ENCODE measurements at regions of chr2 and their contacts with region 1.

Region 1: GRCh38 chr2:219278655-219279516 is at the start of gene DNAJB2:
- DNase-seq: peak; percentile 99
- ATAC-seq: peak; percentile 92
- H3K4me3 Mint-ChIP-seq: peak within 1 kb of the TSS; percentile 93
- H3K27ac Mint-ChIP-seq: peak within 1 kb of the TSS; percentile 98
- H3K4me1 Mint-ChIP-seq: peaks cover 42% of the 10 kb centered on the region
- H3K27me3 Mint-ChIP-seq: no peaks in the 10 kb centered on the region
- total RNA-seq, gene DNAJB2: 43.5 to 51.1 TPM

Region 2: DNA sequence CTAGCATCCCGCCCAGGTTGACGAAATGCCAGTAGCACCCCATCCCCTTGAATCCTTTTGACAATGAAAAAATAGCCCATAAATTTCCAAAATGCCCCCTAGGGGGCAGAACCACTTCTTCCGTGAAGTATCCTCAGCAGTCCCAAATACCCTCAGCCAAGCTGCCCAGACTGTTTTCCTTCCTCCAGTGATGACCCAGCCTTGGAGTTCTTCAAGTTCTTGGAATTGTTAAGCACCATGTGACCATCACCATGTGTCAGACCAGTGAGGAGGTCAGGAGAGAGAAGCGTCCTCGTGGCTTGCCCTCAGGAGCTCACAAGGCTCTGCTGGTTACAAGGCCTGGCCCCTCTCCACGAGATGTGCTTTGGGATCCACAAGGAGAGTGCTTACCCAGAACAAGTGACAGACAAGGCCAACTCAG is 107.6 kb before region 1 on chr2:
- CTCF ChIA-PET with region 1: interaction called, 12 read pairs
- POLR2A ChIA-PET with region 1: interaction called, 10 read pairs
- DNase-seq: peak; percentile 54
- ATAC-seq: peak; percentile 50
- H3K4me3 Mint-ChIP-seq: no peak overlapping the region
- H3K27ac Mint-ChIP-seq: no peak overlapping the region
- H3K4me1 Mint-ChIP-seq: peaks cover 30% of the 10 kb centered on the region
- H3K27me3 Mint-ChIP-seq: no peaks in the 10 kb centered on the region

Region 3: DNA sequence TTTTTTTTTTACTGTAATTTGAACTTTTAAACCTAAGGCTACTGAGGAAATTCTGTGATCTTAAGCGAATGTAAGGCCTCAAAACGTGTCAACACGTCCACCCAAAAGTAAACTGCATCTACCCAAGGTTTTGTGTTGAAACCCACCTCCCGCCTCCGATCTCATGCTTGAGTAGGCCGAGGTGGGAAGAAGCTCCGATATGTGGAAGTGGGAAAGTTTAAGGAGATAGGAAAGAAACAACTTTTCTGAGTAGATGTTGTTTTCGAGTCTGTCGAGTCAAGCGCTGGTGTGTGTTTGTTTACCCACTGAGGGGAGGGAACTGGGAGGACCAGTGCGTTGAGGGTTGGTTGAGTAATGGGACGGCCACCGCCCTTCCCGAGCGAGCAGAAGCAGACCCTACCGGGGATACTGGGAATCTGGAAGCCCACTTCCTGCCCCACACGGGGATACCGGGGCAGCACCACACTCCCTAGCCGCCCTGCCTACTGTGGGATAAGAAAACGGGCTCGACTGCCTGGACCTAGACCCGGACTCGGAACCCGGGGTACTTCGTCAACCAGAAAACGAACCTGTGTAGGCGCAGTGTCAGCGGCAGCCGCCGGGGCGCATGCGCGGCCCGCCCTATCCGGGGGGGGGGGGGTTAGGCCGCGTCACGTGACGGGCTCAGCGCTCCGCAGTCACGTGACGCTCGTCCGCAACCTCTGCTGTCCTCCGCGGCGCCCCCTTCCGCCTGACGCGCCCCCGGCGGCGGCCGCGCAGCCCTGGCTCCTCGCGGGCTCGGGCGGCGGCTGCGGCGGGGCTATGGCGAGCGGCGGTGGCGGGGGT is 101.1 kb before region 1 on chr2 and contains the start of gene RETREG2:
- CTCF ChIA-PET with region 1: interaction called, 3 read pairs
- POLR2A ChIA-PET with region 1: interaction called, 10 read pairs
- DNase-seq: peak; percentile 82
- ATAC-seq: peak; percentile 55
- H3K4me3 Mint-ChIP-seq: peak within 1 kb of the TSS; percentile 92
- H3K27ac Mint-ChIP-seq: peak within 1 kb of the TSS; percentile 95
- H3K4me1 Mint-ChIP-seq: peaks cover 61% of the 10 kb centered on the region
- H3K27me3 Mint-ChIP-seq: no peaks in the 10 kb centered on the region
- total RNA-seq, gene RETREG2: 104 to 111 TPM

Region 4: GRCh38 chr2:219213486-219214071 is 65.3 kb before region 1 on chr2:
- CTCF ChIA-PET with region 1: no interaction called
- POLR2A ChIA-PET with region 1: no interaction called
- DNase-seq: no peak
- ATAC-seq: no peak
- H3K4me3 Mint-ChIP-seq: no peak overlapping the region
- H3K27ac Mint-ChIP-seq: no peak overlapping the region
- H3K4me1 Mint-ChIP-seq: peaks cover 53% of the 10 kb centered on the region
- H3K27me3 Mint-ChIP-seq: no peaks in the 10 kb centered on the region

Region 5: GRCh38 chr2:219229305-219230058 is 49.4 kb before region 1 on chr2 and contains the starts of genes ANKZF1 and ATG9A:
- CTCF ChIA-PET with region 1: interaction called, 4 read pairs
- POLR2A ChIA-PET with region 1: interaction called, 12 read pairs
- DNase-seq: peak; percentile 100
- ATAC-seq: peak; percentile 98
- H3K4me3 Mint-ChIP-seq: peak within 1 kb of the TSS; percentile 100
- H3K27ac Mint-ChIP-seq: peak within 1 kb of the TSS; percentile 100
- H3K4me1 Mint-ChIP-seq: peaks cover 61% of the 10 kb centered on the region
- H3K27me3 Mint-ChIP-seq: no peaks in the 10 kb centered on the region
- total RNA-seq, gene ANKZF1: 106 to 114 TPM
- total RNA-seq, gene ATG9A: 51.7 to 53.8 TPM

Region 6: DNA sequence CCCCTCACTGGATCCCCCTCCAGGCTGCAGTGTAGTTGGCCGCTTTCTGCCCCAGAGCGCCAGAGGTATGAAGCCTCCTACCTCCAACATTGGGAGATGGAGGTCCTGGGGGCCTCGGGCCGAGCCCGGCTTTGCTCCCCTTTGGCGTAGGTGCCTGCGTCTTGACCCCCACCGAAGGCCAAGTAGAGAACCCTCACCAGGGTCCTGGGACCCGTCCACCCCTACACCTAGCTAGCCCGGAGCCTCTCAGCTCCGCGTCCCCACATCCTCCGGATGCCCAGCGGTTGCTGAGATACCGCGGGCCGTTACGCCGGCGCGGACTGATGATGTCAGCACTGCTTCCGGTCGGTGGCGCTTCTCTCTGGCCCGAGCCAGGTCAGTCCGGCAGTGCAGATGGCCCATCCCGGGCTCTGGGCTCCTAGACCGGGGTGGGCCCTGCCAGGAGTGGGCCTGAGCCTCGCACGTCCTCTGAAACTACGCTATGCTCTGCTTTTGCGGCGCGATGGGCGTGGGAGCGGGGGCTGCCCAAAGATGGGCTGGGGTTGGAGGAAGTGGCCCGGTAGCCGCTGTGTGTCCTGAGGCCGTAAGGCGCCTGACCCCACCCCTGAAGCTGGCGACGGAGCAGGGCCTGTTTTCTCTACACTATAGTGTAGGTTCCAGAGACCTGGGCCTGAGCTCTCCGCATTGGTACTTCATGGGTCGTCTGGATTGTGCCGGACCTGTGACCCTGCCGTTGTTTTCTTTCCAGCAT is 33.6 kb before region 1 on chr2 and contains the starts of genes GLB1L and STK16:
- CTCF ChIA-PET with region 1: interaction called, 65 read pairs
- POLR2A ChIA-PET with region 1: interaction called, 20 read pairs
- DNase-seq: peak; percentile 92
- ATAC-seq: peak; percentile 74
- H3K4me3 Mint-ChIP-seq: peak within 1 kb of the TSS; percentile 99
- H3K27ac Mint-ChIP-seq: peak within 1 kb of the TSS; percentile 100
- H3K4me1 Mint-ChIP-seq: peaks cover 66% of the 10 kb centered on the region
- H3K27me3 Mint-ChIP-seq: no peaks in the 10 kb centered on the region
- total RNA-seq, gene GLB1L: 3.4 to 4.0 TPM
- total RNA-seq, gene STK16: 31.2 to 31.5 TPM

Region 7: DNA sequence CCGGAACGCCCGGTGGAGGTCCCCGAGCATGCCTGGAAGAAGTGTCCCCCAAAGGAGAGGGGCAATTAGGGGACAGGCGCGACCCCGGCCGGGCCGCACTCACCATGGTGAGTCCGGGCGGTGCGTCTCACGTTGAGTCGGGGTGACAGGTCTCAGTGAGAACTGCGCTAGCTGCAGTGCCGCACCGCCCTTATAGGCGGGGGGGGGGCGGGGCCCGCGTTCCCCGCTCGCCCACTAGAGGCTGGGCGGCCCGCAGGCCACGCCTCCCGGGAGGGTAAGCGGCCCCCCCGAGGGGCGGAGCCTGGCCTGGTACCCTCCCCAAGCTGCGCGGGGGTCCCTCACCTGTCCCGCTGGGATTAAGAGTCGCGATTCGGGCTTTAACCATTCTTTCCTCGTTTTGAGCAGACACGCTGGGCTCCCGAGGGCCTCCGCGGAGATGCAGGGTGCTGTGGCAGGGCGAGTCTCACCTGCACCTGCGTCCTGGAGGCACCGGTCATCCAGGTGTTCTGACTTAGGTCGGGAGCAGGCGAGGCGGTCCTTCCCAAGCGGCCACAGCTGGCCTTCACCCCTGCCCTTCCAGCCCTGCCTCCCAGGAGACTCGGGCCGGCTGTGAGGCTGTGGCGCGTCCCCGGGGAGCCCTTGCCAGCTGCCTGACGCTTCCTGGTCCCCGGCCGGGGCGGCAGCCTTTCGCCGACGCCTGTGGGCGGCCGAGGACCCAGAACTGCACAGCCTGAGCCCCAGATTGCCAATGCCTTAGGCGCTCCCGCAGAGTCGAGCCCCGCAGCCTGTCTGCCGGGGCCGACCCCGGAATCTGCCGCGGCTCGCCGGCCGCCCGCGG is 24.9 kb before region 1 on chr2 and contains the start of gene TUBA4A:
- CTCF ChIA-PET with region 1: interaction called, 79 read pairs
- POLR2A ChIA-PET with region 1: interaction called, 42 read pairs
- DNase-seq: peak; percentile 91
- ATAC-seq: peak; percentile 80
- H3K4me3 Mint-ChIP-seq: peak within 1 kb of the TSS; percentile 99
- H3K27ac Mint-ChIP-seq: peak within 1 kb of the TSS; percentile 100
- H3K4me1 Mint-ChIP-seq: peaks cover 44% of the 10 kb centered on the region
- H3K27me3 Mint-ChIP-seq: no peaks in the 10 kb centered on the region
- total RNA-seq, gene TUBA4A: 286 to 292 TPM

Region 8: DNA sequence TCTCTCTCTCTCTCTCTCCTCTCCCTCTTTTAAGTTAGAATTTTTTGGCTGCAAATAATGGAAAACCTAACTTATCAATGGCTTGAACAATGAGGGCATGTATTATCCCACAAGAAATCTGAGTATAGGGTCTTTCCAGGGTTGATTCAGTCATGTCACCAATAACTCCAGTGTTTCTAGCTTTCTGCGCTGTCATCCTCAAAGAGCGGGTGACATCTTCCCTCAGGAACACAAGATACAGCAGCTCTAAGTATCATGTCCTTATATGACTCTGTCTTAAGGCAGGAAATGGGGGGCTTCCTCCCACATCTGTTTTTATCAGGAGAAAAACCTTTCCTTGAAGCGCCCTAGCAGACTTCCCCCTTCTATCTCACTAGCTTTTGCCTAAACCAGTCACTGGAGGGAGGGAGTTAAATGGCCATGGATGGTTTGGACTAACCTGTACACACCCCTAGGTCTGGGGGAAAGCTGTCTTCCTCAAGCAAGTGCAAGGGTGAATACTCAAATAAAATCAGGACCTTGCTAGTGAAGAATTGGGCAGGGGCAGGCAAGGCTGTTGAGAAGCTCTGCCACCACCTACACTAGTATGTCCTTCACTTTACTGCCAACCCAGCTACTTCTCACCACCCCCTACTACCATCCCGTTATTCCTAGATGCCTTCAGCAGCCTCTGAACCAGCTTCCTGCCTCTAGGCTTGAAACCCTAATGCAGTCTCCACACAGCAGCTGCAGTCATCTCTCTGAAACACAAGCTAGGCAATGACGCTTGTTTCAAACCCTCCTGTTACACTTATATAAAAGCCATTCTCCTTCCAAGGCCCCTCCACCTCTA is 17.6 kb before region 1 on chr2:
- CTCF ChIA-PET with region 1: interaction called, 79 read pairs
- POLR2A ChIA-PET with region 1: interaction called, 4 read pairs
- DNase-seq: no peak
- ATAC-seq: no peak
- H3K4me3 Mint-ChIP-seq: no peak overlapping the region
- H3K27ac Mint-ChIP-seq: no peak overlapping the region
- H3K4me1 Mint-ChIP-seq: peaks cover 4% of the 10 kb centered on the region
- H3K27me3 Mint-ChIP-seq: peaks cover 15% of the 10 kb centered on the region